ENCODE measurements at regions of chr6 and their contacts with region 1.

Region 1: DNA sequence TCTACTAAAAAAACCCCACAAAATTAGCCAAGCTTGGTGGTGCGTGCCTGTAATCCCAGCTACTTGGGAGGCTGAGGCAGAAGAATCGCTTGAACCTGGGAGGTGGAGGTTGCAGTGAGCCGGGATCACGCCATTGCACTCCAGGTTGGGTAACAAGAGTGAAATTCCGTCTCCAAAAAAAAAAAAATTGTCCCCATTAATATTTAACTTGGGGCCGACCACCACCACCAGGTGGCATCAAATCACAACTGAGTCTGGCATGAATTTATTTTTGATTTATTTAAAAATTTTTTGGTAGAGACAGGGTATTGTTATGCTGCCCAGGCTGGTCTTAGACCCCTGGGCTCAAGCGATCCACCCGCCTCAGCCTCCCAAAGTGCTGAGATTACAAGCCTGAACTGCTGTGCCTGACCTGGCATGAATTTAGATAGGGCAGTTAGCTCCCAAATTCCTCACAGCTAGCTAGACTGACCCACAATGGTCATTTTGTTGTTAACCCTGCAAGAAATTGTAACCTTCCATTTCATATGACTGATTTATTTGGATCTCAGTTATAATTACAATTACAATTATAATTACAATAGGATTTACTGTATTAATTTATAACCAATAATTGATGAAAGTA is 17.1 kb upstream of the BEND3 start:
- DNase-seq: peak; percentile 44 to 46
- H3K4me3 ChIP-seq: no peak overlapping the region
- H3K27ac ChIP-seq: no peak overlapping the region
- H3K4me1 ChIP-seq: no peaks in the 10 kb centered on the region
- H3K27me3 ChIP-seq: no peaks in the 10 kb centered on the region
- CTCF ChIP-seq: peak; percentile 82

Region 2: DNA sequence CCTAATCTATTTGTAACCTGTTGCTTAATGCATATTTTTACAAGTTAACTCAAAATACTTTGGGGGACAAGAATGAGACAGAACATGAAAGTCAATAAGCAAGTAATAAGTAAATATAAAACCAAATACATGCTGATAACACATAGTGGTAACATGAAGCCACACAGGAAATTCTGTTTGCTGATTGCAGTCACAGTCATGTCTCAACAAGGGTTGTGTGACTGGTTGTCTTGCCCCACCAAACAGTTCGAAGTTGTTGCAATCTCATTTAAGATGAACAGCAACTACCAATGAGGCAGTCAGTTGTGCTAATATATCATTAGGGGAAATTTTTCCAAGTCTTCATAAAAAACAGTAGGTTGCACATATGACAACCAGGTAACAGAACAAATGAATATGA is 172.5 kb before region 1 on chr6:
- CTCF ChIA-PET with region 1: no interaction called
- POLR2A ChIA-PET with region 1: no interaction called
- intact Hi-C with region 1: no loop called
- DNase-seq: peak in 1 of 2 experiments; percentile 47
- H3K4me3 ChIP-seq: no peak overlapping the region
- H3K27ac ChIP-seq: no peak overlapping the region
- H3K4me1 ChIP-seq: no peaks in the 10 kb centered on the region
- H3K27me3 ChIP-seq: no peaks in the 10 kb centered on the region
- CTCF ChIP-seq: no peak

Region 3: DNA sequence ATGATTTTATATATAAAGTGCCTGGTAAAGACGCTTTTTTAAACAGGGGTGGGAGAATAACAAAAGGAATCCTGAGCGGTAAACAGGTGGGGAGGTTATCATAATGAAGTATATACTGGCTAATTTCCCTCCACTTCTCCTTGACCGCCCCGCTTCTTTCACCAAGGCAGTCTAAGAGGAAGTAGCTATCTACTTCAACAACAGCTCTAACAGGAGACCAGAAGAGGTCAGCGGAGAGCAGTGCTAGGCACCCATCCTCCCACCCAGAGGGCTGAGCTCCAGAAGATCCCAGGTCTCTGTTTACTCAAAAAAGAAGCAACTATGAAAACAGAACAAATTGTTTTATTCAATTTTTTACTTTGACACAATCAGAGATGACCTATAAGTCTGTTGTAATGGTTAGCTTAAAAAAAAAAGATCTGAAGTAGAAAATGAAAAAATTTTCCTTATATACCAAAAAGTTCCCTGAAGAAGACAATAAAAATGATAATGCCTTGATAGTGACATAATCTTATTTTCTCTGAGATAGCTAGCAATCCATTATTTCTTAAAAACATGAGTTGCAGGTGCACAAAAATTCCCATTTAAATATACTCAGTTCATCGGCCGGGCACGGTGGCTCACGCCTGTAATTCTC is 185.8 kb after region 1 on chr6:
- CTCF ChIA-PET with region 1: no interaction called
- POLR2A ChIA-PET with region 1: no interaction called
- intact Hi-C with region 1: loop called (anchors 5 kb)
- DNase-seq: peak in 1 of 2 experiments; percentile 37
- H3K4me3 ChIP-seq: no peak overlapping the region
- H3K27ac ChIP-seq: no peak overlapping the region
- H3K4me1 ChIP-seq: no peaks in the 10 kb centered on the region
- H3K27me3 ChIP-seq: no peaks in the 10 kb centered on the region
- CTCF ChIP-seq: peak; percentile 76

Region 4: DNA sequence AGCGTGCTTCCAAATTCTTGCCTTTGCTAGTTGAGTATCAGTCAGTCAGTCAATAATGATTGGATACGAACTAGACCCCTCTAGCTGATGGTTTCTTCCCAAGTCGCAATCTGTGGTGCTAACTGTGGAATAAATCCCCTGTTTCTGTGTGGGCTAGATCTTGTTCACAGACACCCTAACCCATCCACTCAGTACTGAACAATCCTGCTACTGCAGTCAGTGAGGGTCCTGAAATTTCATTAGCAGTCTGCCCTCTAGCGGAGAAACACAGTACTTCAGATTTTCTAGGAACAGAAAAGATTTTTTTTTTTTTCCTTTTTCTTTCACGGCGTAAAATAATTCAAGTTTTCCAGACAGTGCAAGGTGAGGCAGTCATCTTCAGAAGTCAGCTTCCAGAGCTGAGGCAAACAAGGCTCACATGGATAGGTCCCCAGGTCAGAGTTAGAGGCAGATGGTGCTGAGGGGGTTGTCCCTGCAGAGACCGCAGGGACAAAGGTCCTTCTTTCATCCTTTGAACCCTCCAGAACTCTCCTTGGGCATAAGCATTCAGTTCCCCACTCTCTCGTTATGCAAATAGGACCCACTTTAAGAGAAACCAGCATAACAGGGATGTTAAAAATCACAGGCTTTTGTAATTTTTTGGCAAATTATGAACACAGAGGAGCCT is 572.0 kb after region 1 on chr6:
- CTCF ChIA-PET with region 1: no interaction called
- POLR2A ChIA-PET with region 1: no interaction called
- intact Hi-C with region 1: loop called (anchors 1 kb)
- DNase-seq: peak; percentile 9 to 34
- H3K4me3 ChIP-seq: no peak overlapping the region
- H3K27ac ChIP-seq: no peak overlapping the region
- H3K4me1 ChIP-seq: no peaks in the 10 kb centered on the region
- H3K27me3 ChIP-seq: peaks cover 5% of the 10 kb centered on the region; the same call in 1 of the 2 replicates
- CTCF ChIP-seq: peak; percentile 96

Region 5: GRCh38 chr6:107847844-107848802 is 715.7 kb after region 1 on chr6:
- CTCF ChIA-PET with region 1: interaction called, 3 read pairs
- POLR2A ChIA-PET with region 1: no interaction called
- intact Hi-C with region 1: loop called (anchors 1 kb)
- DNase-seq: peak; percentile 52 to 83
- H3K4me3 ChIP-seq: peak overlapping the region; percentile 51
- H3K27ac ChIP-seq: no peak overlapping the region
- H3K4me1 ChIP-seq: no peaks in the 10 kb centered on the region
- H3K27me3 ChIP-seq: no peaks in the 10 kb centered on the region
- CTCF ChIP-seq: peak; percentile 97

Measured in PC-9 (cell line).